Colonic mucosa (tissue), 4 donors: ENCODE measurements at regions of chr2 and their contacts with region 1.

Region 1: GRCh38 chr2:174341286-174341994 is 6.7 kb downstream of the SP9 start:
- DNase-seq: peak; percentile 89
- H3K4me3 ChIP-seq: no peak overlapping the region
- H3K27ac ChIP-seq: no peak overlapping the region
- H3K4me1 ChIP-seq: peaks cover 34% of the 10 kb centered on the region
- H3K27me3 ChIP-seq: peaks cover 84% of the 10 kb centered on the region
- CTCF ChIP-seq: peak; percentile 98

Region 2: DNA sequence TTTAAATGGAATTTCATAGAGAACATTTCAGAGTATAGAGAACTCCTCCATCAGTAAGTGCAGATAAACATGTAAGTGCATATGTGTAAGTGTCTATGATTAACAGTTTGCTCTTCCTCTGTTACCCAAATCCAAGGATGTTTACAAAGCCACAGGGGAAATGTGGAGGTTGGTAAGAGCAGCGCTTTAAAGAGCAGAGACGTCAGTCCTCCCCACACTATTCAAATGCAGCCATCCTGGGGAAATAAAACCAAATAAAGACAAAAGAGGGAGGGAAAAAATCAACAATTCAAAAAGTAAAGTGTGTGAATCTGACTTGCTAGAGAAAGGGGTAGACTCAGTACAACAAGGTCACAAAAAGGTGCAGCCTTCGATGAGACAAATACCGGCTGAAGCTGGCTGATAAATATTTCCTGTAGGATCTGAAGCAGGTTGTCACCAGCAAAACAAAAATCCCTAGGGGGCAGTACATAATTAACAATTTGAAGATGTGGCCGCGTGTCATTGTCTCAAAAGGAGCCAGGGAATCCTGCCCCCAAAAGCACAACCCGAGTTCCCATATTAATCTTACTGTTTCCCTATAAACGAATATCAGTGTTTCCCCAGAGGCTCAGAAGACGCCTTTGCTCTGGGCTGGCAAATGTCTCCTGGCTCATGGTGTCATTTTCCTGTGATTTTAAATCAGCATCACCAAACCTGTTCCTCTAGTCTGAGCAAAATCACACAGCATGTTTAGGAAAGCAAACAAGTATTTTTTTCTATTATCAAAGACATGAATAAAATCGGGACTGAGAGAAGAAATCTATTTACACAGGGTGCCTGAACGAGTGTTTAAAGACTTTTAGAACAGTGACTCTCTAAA is 770.2 kb before region 1 on chr2:
- intact Hi-C with region 1: loop called (anchors 10 kb)
- DNase-seq: peak; percentile 46
- H3K4me3 ChIP-seq: no peak overlapping the region
- H3K27ac ChIP-seq: peak overlapping the region; percentile 31
- H3K4me1 ChIP-seq: no peaks in the 10 kb centered on the region
- H3K27me3 ChIP-seq: no peaks in the 10 kb centered on the region
- CTCF ChIP-seq: peak; percentile 11

Region 3: GRCh38 chr2:173884025-173884802 is 457.2 kb before region 1 on chr2:
- intact Hi-C with region 1: loop called (anchors 10 kb)
- DNase-seq: peak; percentile 34
- H3K4me3 ChIP-seq: no peak overlapping the region
- H3K27ac ChIP-seq: no peak overlapping the region
- H3K4me1 ChIP-seq: no peaks in the 10 kb centered on the region
- H3K27me3 ChIP-seq: no peaks in the 10 kb centered on the region
- CTCF ChIP-seq: peak; percentile 55

Region 4: GRCh38 chr2:174158003-174158402 is 183.4 kb before region 1 on chr2:
- intact Hi-C with region 1: loop called (anchors 5 kb)
- DNase-seq: peak; percentile 42
- H3K4me3 ChIP-seq: no peak overlapping the region
- H3K27ac ChIP-seq: no peak overlapping the region
- H3K4me1 ChIP-seq: no peaks in the 10 kb centered on the region
- H3K27me3 ChIP-seq: no peaks in the 10 kb centered on the region
- CTCF ChIP-seq: peak; percentile 49